PC-9 (cell line): ENCODE measurements at regions of chr1 and their contacts with region 1.

Region 1: GRCh38 chr1:154419620-154420571 is 14.8 kb downstream of the IL6R start:
- DNase-seq: peak; percentile 63 to 85
- H3K4me3 ChIP-seq: no peak overlapping the region
- H3K27ac ChIP-seq: peak overlapping the region; percentile 66
- H3K4me1 ChIP-seq: peaks cover 52% of the 10 kb centered on the region
- H3K27me3 ChIP-seq: no peaks in the 10 kb centered on the region
- CTCF ChIP-seq: no peak

Region 2: DNA sequence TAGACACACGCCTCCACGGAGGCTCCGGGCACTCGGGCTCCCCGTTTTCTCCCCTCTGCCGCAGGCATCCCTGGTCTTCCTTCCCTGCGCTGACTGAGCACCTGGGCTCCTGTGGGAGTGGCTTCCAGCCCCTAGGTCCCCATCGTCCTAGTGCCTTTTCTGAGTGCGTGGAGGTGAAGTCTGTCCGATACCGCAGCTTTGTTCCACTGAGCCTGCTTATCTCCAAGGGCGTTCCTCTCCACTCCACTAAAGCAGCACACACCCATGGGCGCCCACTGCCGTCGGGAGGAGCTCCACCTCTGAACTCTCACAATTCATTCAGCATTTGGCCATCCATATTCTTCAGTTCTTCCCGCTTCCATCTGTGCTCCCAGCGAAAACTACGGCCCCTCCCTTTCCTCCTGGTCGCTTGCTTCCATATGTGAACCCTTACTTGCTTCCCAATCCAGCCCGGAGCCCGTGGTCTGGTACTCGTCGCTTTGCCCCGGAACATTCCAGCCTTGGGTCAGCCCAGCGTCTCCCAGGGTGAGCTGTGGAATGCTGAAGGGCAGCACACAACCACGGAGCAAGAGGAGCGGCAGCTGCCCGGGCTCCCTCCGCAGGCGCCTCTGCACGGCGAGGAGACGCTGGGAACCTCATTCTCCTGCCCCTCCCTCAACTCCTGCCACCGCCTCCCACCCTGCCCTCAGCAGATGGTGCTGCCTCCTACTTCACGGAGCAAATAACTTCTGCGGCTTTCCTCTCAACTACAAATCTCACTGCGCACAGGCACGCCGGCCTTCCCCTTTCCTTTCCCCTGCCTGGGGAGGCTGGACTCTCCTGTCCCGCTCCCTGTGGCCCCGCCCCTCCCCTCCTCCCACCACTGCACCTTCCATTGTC is 67.1 kb before region 1 on chr1:
- CTCF ChIA-PET with region 1: no interaction called
- POLR2A ChIA-PET with region 1: interaction called, 11 read pairs
- intact Hi-C with region 1: no loop called
- DNase-seq: peak in 1 of 2 experiments; percentile 52
- H3K4me3 ChIP-seq: peak overlapping the region; percentile 27; the same call in 1 of the 2 replicates
- H3K27ac ChIP-seq: no peak overlapping the region
- H3K4me1 ChIP-seq: no peaks in the 10 kb centered on the region
- H3K27me3 ChIP-seq: peaks cover 45% of the 10 kb centered on the region
- CTCF ChIP-seq: no peak